ENCODE measurements at regions of chr16 and their contacts with region 1.

Region 1: DNA sequence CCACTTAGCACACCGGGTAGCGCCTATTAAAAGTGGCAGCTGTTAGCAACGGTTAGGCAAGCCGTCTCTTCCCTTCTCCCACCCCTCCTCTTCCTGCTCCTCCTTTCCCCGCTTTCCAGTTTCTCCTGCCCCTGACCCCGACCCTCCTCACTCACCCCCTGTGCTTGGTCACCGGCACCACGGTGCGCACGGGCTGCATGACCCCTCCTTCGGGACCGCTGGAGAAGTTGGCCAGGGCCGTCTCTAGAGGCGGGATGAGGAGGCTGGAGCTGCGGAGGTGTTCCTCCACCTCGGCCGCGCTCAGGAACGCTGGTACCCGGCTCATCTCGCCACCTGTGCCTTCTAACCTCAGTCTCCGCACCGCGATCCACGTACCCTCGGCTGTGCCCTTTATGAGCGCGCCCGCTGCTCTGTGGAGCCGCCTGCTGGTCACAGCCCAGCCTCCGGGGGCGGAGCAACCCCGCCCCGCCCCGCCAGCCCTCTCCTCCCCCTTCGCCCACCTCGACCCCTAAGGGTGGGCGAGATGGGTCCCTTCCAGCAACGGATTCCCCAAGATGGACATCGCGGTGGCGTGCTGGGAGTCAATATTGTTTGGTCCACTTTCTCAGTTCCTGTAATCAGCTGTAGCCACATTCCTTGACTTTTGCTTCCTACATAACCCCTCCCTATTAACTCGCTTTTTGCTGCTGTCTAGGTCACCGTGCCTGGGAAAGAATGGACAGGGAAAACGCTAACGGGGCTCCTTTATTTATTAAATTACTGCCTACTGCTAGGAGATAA is at the start of gene CRYM:
- DNase-seq: peak; percentile 35
- ATAC-seq: peak; percentile 94
- H3K4me3 ChIP-seq: peak within 1 kb of the TSS; percentile 51 to 79 (median 62)
- H3K27ac ChIP-seq: no peak within 1 kb of the TSS
- H3K4me1 ChIP-seq: peaks cover 27% of the 10 kb centered on the region
- H3K27me3 ChIP-seq: peaks cover 0 to 21% of the 10 kb centered on the region in 2 experiments; a peak in 2 of 5 replicates
- CTCF ChIP-seq: peak; percentile 99
- EP300 ChIP-seq: no peak
- POLR2A ChIP-seq: no peak
- RAD21 ChIP-seq: peak; percentile 94
- total RNA-seq, gene CRYM: 1.9 and 2.4 TPM in 2 replicates

Region 2: GRCh38 chr16:21150375-21151001 is 127.6 kb before region 1 on chr16 and contains the start of gene DNAH3:
- CTCF ChIA-PET with region 1: no interaction called
- POLR2A ChIA-PET with region 1: no interaction called
- in situ Hi-C with region 1: no loop called
- intact Hi-C with region 1: loop called (anchors 1 kb)
- DNase-seq: peak; percentile 39
- ATAC-seq: peak; percentile 74
- H3K4me3 ChIP-seq: peak within 1 kb of the TSS in 2 of 3 experiments; percentile 0 to 12; a peak in 1 of 6 replicates
- H3K27ac ChIP-seq: no peak within 1 kb of the TSS
- H3K4me1 ChIP-seq: peaks cover 21% of the 10 kb centered on the region
- H3K27me3 ChIP-seq: peaks cover 2 to 16% of the 10 kb centered on the region in 2 experiments; a peak in 2 of 5 replicates
- CTCF ChIP-seq: no peak
- EP300 ChIP-seq: no peak
- POLR2A ChIP-seq: no peak
- RAD21 ChIP-seq: no peak
- total RNA-seq, gene DNAH3: 0.07 and 0.34 TPM in 2 replicates

Region 3: GRCh38 chr16:21158208-21159110 is 119.7 kb before region 1 on chr16 and contains the start of gene LDAF1:
- CTCF ChIA-PET with region 1: interaction called, 12 read pairs
- POLR2A ChIA-PET with region 1: no interaction called
- in situ Hi-C with region 1: no loop called
- intact Hi-C with region 1: loop called (anchors 1 kb)
- DNase-seq: peak; percentile 33
- ATAC-seq: peak; percentile 93
- H3K4me3 ChIP-seq: peak within 1 kb of the TSS; percentile 79 to 88 (median 80)
- H3K27ac ChIP-seq: no peak within 1 kb of the TSS
- H3K4me1 ChIP-seq: peaks cover 33% of the 10 kb centered on the region
- H3K27me3 ChIP-seq: peaks cover 2 to 18% of the 10 kb centered on the region in 2 experiments; a peak in 2 of 5 replicates
- CTCF ChIP-seq: peak; percentile 40; the same call in 1 of the 2 replicates
- EP300 ChIP-seq: peak in 1 of 2 experiments; percentile 32; a peak in 2 of 4 replicates
- POLR2A ChIP-seq: no peak
- RAD21 ChIP-seq: peak; percentile 48; the same call in 1 of the 2 replicates
- total RNA-seq, gene LDAF1: 6.3 and 8.3 TPM in 2 replicates

Region 4: GRCh38 chr16:21172650-21173049 is 105.5 kb before region 1 on chr16:
- CTCF ChIA-PET with region 1: no interaction called
- POLR2A ChIA-PET with region 1: no interaction called
- in situ Hi-C with region 1: no loop called
- intact Hi-C with region 1: no loop called
- DNase-seq: no peak
- ATAC-seq: no peak
- H3K4me3 ChIP-seq: no peak overlapping the region
- H3K27ac ChIP-seq: no peak overlapping the region
- H3K4me1 ChIP-seq: no peaks in the 10 kb centered on the region
- H3K27me3 ChIP-seq: no peaks in the 10 kb centered on the region
- CTCF ChIP-seq: no peak
- EP300 ChIP-seq: no peak
- POLR2A ChIP-seq: no peak
- RAD21 ChIP-seq: no peak

Region 5: DNA sequence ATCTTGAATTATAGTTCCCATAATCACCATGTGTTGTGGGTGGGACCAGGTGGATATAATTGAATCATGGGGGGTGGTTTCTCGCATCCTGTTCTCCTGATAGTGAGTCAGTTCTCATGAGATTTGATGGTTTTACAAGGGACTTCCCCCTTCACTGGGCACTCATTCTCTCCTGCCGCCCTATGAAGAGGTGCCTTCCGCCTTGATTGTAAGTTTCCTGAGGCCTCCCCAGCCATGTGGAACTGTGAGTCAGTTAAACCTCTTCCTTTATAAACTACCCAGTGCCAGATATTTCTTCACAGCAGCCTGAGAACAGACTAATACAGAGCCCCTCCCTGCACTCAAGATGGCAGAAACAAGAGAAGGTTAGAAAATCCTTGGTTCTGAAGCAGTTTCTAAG is 93.3 kb before region 1 on chr16:
- CTCF ChIA-PET with region 1: interaction called, 58 read pairs
- POLR2A ChIA-PET with region 1: no interaction called
- in situ Hi-C with region 1: loop called (anchors 5 kb)
- intact Hi-C with region 1: loop called (anchors 1 kb)
- DNase-seq: no peak
- ATAC-seq: no peak
- H3K4me3 ChIP-seq: no peak overlapping the region
- H3K27ac ChIP-seq: no peak overlapping the region
- H3K4me1 ChIP-seq: peaks cover 45% of the 10 kb centered on the region
- H3K27me3 ChIP-seq: no peaks in the 10 kb centered on the region
- CTCF ChIP-seq: no peak
- EP300 ChIP-seq: no peak
- POLR2A ChIP-seq: no peak
- RAD21 ChIP-seq: no peak

Region 6: DNA sequence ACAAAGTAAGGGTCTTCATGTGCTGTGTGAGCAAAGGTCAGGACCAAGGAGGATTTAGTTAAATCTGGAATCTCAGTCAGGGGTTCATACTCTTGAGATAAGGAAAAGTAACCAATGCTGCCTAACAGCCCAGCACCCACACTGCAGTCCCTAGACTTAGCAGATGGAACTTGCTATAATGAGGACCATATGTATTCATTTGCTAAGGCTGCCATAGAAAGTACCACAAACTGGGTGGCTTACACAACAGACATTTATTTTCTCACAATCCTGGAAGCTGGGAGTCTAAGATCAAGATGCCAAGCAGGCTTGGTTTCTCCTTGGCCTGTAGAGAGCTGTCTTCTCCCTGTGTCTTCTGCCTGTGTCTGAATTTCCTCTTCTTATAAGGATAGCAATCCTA is 87.5 kb before region 1 on chr16:
- CTCF ChIA-PET with region 1: interaction called, 58 read pairs
- POLR2A ChIA-PET with region 1: no interaction called
- in situ Hi-C with region 1: loop called (anchors 5 kb)
- intact Hi-C with region 1: loop called (anchors 1 kb)
- DNase-seq: no peak
- ATAC-seq: no peak
- H3K4me3 ChIP-seq: no peak overlapping the region
- H3K27ac ChIP-seq: no peak overlapping the region
- H3K4me1 ChIP-seq: peaks cover 30% of the 10 kb centered on the region
- H3K27me3 ChIP-seq: peaks cover 0 to 22% of the 10 kb centered on the region in 2 experiments; a peak in 2 of 5 replicates
- CTCF ChIP-seq: no peak
- EP300 ChIP-seq: no peak
- POLR2A ChIP-seq: no peak
- RAD21 ChIP-seq: no peak

Region 7: DNA sequence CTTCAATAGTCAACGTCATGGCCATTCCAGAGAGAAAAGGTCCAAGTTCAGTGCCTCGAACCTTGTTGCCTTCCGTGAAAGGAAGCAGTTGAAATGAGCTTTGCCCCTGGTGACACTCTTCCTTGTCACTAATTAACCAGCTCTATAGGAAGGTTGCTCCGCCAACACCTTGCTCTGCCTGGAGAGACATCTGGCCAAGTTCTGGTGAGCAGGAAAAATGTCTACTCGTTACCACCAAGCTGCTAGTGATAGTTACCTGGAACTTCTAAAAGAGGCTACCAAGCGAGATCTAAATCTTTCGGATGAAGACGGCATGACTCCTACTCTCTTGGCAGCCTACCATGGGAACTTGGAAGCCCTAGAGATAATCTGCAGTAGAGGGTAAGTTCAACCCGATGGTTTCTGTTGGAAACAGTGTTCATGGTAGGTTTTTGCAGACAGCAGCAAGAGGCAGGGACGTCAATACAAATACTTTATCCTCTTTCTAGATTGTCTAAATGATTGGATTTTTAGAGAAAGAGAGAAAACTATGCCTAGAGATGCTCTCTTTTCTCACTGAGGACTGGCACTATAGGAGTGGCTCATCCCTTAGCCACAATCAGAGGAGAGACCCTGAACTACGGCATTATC is 44.5 kb before region 1 on chr16 and contains the start of gene ANKS4B:
- CTCF ChIA-PET with region 1: no interaction called
- POLR2A ChIA-PET with region 1: interaction called, 3 read pairs
- in situ Hi-C with region 1: no loop called
- intact Hi-C with region 1: loop called (anchors 5 kb)
- DNase-seq: peak; percentile 94
- ATAC-seq: peak; percentile 99
- H3K4me3 ChIP-seq: peak within 1 kb of the TSS; percentile 70 to 80 (median 71)
- H3K27ac ChIP-seq: peak within 1 kb of the TSS; percentile 68
- H3K4me1 ChIP-seq: peaks cover 75% of the 10 kb centered on the region
- H3K27me3 ChIP-seq: no peaks in the 10 kb centered on the region; a peak in 1 of 5 replicates
- CTCF ChIP-seq: peak; percentile 28
- EP300 ChIP-seq: peak in 1 of 2 experiments; percentile 89; a peak in 2 of 4 replicates
- POLR2A ChIP-seq: peak; percentile 72 to 91
- RAD21 ChIP-seq: no peak
- total RNA-seq, gene ANKS4B: 30.0 and 37.7 TPM in 2 replicates

Region 8: GRCh38 chr16:21263640-21264570 is 14.2 kb before region 1 on chr16:
- CTCF ChIA-PET with region 1: no interaction called
- POLR2A ChIA-PET with region 1: interaction called, 11 read pairs
- in situ Hi-C with region 1: no loop called
- intact Hi-C with region 1: no loop called
- DNase-seq: peak; percentile 81
- ATAC-seq: peak; percentile 76
- H3K4me3 ChIP-seq: peak overlapping the region; percentile 23 to 50 (median 45)
- H3K27ac ChIP-seq: peak overlapping the region; percentile 46
- H3K4me1 ChIP-seq: peaks cover 68% of the 10 kb centered on the region
- H3K27me3 ChIP-seq: no peaks in the 10 kb centered on the region
- CTCF ChIP-seq: peak; percentile 38
- EP300 ChIP-seq: no peak
- POLR2A ChIP-seq: peak; percentile 40 to 60; a peak in 3 of 4 replicates
- RAD21 ChIP-seq: no peak

Region 9: DNA sequence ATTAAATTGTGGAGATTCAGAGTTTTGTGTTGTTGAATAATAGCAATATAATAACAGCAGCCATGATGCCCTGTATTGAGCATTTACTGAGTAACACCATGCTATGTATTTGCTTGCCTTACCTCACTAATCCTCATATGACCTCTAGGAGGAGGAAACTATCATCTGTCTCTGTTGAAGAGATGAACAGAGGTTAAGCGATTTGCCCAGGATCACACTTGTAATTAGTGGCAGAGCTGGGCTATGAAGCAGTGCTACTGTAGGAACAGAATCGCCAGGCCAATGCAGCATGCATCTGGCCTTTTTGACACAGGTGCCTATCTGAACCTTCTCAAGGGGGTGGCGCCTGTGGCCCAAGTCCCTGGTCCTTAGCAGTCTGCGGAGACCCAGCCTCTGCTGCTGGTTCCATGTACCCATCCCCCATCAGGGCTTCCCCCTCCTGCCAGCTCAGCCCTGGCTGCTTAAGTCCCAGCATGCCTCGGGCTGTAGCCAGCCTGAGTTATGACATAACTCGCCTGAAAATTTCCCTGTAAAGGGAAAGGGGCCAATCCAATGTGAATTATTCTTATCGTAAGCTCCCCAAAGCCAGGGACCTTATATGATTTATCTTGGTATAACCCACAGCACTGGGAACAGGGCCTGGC is 1485.4 kb after region 1 on chr16:
- CTCF ChIA-PET with region 1: no interaction called
- POLR2A ChIA-PET with region 1: no interaction called
- in situ Hi-C with region 1: no loop called
- intact Hi-C with region 1: no loop called
- DNase-seq: no peak
- ATAC-seq: no peak
- H3K4me3 ChIP-seq: no peak overlapping the region
- H3K27ac ChIP-seq: no peak overlapping the region
- H3K4me1 ChIP-seq: no peaks in the 10 kb centered on the region
- H3K27me3 ChIP-seq: no peaks in the 10 kb centered on the region
- CTCF ChIP-seq: no peak
- EP300 ChIP-seq: no peak
- POLR2A ChIP-seq: no peak
- RAD21 ChIP-seq: no peak